ENCODE measurements at regions of chr15 and their contacts with region 1.

Region 1: GRCh38 chr15:97057503-97057902 is 727.0 kb downstream of the NR2F2 start:
- DNase-seq: no peak
- ATAC-seq: no peak
- H3K4me3 ChIP-seq: no peak overlapping the region
- H3K27ac ChIP-seq: no peak overlapping the region
- H3K4me1 ChIP-seq: no peaks in the 10 kb centered on the region
- H3K27me3 ChIP-seq: no peaks in the 10 kb centered on the region
- CTCF ChIP-seq: no peak
- EP300 ChIP-seq: no peak
- POLR2A ChIP-seq: no peak
- RAD21 ChIP-seq: no peak

Region 2: DNA sequence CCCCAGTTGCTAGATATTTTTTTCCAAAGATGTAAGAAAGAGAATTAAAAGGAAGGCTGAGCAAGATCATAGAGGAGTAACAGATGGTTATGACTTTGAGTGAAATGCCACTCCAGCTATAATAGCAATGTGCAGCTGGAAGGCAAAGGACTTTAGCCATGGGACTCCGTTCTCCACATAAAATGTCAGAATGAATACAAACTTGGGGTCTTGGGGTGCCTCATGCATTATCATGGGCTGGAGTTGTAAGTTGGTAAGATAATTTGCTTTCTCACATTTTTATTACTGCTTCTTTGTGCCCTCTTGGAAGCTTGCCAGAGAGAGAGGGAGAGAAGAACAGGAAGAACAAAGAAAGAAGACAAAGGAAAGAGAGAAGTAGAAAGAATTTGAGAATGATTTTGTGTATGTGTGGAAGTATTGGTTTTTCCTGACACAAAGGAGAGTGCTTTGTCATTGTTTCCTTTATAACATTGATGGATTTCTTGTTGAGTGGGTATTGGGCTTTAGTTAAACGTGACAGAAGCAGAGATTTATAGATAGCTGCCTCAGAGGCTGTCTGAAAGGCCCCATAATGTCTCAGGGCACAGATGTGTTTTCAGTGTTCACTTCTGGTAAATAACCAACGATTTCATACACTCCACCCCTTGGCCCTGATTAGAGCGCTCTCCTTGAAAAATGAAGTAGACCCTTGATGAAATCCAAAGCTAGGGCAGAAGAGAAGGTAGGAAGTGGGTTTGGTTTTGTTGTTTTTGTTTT is 11.7 kb before region 1 on chr15:
- CTCF ChIA-PET with region 1: no interaction called
- POLR2A ChIA-PET with region 1: no interaction called
- RAD21 ChIA-PET with region 1: interaction called, 3 read pairs
- SMC1A ChIA-PET with region 1: interaction called, 15 read pairs
- in situ Hi-C with region 1: no loop called
- intact Hi-C with region 1: no loop called
- DNase-seq: no peak
- ATAC-seq: no peak
- H3K4me3 ChIP-seq: no peak overlapping the region
- H3K27ac ChIP-seq: no peak overlapping the region
- H3K4me1 ChIP-seq: no peaks in the 10 kb centered on the region
- H3K27me3 ChIP-seq: no peaks in the 10 kb centered on the region
- CTCF ChIP-seq: no peak
- EP300 ChIP-seq: no peak
- POLR2A ChIP-seq: no peak
- RAD21 ChIP-seq: no peak

Measured in GM12878 (cell line).